ENCODE measurements at regions of chr5 and their contacts with region 1.

Region 1: GRCh38 chr5:142145106-142145900 is 36.7 kb downstream of the NDFIP1 start:
- DNase-seq: peak; percentile 45
- ATAC-seq: peak; percentile 95
- H3K4me3 ChIP-seq: no peak overlapping the region
- H3K27ac ChIP-seq: no peak overlapping the region
- H3K4me1 ChIP-seq: no peaks in the 10 kb centered on the region
- H3K27me3 ChIP-seq: no peaks in the 10 kb centered on the region
- CTCF ChIP-seq: peak; percentile 69 to 84 (median 84); a peak in 5 of 6 replicates
- POLR2A ChIP-seq: no peak
- RAD21 ChIP-seq: peak; percentile 71

Region 2: DNA sequence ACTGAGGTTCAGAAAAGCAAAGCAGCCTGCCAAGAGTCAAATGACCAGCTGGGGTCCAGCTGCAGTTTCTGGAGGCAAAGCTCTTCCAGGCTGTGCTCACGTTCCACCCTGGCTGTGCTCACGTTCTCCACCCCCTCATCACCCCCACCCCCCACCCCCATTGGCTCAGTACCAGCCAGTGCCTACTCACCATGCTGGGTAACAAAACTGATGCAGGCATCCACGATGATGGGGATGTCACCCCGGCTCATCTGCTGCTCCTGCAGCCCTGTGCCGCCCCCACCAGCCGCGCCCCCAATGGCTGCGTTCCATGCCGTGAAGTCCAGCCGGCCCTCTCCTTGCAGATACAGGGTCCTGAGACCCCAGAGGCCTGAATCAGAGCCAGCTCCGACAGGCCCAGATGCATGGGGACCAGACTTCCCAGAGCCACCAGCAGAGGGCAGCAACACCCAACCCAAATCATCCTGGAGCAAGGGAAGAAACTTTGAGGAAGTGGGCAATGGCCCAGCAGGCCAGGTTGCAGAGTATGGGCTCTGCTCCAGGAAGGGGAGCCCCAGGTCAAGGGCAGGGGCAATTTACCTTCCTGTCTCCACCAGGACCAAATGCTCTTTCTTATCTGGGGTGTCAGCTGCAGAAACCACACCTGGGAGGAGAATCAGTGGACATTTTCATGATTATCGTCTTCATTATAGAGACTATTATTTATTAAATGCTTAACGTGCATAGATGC is 480.4 kb before region 1 on chr5:
- CTCF ChIA-PET with region 1: interaction called, 4 read pairs
- POLR2A ChIA-PET with region 1: no interaction called
- RAD21 ChIA-PET with region 1: no interaction called
- intact Hi-C with region 1: loop called (anchors 10 kb)
- DNase-seq: peak; percentile 54
- ATAC-seq: peak; percentile 95
- H3K4me3 ChIP-seq: no peak overlapping the region
- H3K27ac ChIP-seq: no peak overlapping the region
- H3K4me1 ChIP-seq: 0 out of 4 replicates have a peak, but pooled peaks cover 0 to 3% of the 10 kb centered on the region in 2 experiments
- H3K27me3 ChIP-seq: no peaks in the 10 kb centered on the region
- CTCF ChIP-seq: peak; percentile 69 to 94 (median 92); a peak in 5 of 6 replicates
- POLR2A ChIP-seq: no peak
- RAD21 ChIP-seq: peak; percentile 95

Region 3: GRCh38 chr5:141691867-141692532 is 453.3 kb before region 1 on chr5:
- CTCF ChIA-PET with region 1: interaction called, 18 read pairs
- POLR2A ChIA-PET with region 1: no interaction called
- RAD21 ChIA-PET with region 1: no interaction called
- intact Hi-C with region 1: loop called (anchors 2 kb)
- DNase-seq: peak; percentile 51
- ATAC-seq: peak; percentile 98
- H3K4me3 ChIP-seq: peak overlapping the region in 1 of 2 experiments; percentile 33; a peak in 1 of 4 replicates
- H3K27ac ChIP-seq: no peak overlapping the region
- H3K4me1 ChIP-seq: peaks cover 0 to 18% of the 10 kb centered on the region in 2 experiments; a peak in 3 of 4 replicates
- H3K27me3 ChIP-seq: no peaks in the 10 kb centered on the region
- CTCF ChIP-seq: peak; percentile 90 to 98 (median 92)
- POLR2A ChIP-seq: no peak
- RAD21 ChIP-seq: peak; percentile 100

Region 4: DNA sequence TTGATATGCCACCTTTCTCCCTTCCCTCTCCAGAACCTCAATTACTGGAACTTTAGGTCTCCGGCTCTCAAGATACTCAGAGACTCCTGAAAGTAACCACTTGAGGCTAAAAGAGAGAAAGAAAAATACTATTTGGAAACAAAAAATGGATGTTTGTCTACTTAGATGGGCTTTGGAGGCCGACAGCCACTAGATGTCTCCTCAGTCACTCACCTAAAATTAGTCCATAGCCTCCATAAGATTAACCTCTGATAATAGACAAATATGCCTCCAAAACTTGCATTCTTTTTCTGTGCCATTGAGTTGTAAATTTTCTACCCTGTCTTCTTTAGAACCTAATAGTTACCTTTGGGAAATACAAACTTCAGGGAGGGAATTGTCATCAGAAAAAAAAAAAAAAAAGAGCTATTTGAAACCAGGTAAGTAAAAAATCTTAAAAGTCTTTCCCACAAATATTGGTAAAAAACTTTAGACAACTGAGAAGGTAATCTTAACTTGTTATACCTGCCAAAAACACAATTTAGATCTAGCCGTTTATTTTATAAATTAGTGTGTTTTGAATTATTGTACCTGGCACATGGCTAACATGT is 255.9 kb before region 1 on chr5:
- CTCF ChIA-PET with region 1: no interaction called
- POLR2A ChIA-PET with region 1: no interaction called
- RAD21 ChIA-PET with region 1: no interaction called
- intact Hi-C with region 1: loop called (anchors 5 kb)
- DNase-seq: no peak
- ATAC-seq: peak; percentile 76
- H3K4me3 ChIP-seq: no peak overlapping the region
- H3K27ac ChIP-seq: no peak overlapping the region
- H3K4me1 ChIP-seq: no peaks in the 10 kb centered on the region
- H3K27me3 ChIP-seq: no peaks in the 10 kb centered on the region
- CTCF ChIP-seq: peak; percentile 37 to 70 (median 55); a peak in 4 of 6 replicates
- POLR2A ChIP-seq: no peak
- RAD21 ChIP-seq: peak; percentile 69

Region 5: DNA sequence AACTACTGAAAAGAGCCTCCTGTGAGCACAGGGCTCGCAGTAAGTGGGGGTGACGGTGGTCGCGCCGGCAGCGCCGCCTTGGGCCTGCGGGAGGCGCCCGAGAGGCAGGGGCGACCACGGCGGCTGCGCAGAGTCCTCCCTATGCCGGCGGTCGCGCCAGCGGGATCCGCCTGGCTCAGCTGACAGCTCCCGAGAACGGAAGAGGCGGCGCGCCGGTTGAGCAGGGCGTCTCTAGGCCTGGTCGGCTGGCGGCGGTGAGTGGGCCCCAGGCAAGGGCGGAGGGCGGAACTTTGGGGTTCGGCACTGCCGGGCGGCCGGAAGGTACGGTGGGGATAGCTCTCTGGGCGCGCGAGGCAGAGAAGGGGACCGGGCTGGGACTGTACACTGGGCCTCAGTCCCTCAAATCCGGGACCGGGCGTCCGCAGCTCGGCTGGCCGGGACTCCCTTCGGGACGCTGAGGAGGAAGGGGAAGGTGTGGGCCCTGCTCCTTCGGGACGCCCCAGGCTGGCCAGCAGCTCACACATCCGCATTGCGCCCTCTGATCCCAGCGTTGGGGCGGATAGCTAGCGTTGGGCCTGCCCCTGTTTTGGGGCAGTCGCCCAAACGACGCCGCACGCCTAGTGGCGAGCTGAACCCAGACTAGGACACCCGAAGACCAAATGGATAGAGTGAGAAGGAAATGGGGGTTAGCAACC is 176.2 kb before region 1 on chr5 and contains the start of gene RNF14:
- CTCF ChIA-PET with region 1: interaction called, 12 read pairs
- POLR2A ChIA-PET with region 1: interaction called, 3 read pairs
- RAD21 ChIA-PET with region 1: no interaction called
- intact Hi-C with region 1: no loop called
- DNase-seq: peak; percentile 83
- ATAC-seq: peak; percentile 97
- H3K4me3 ChIP-seq: peak within 1 kb of the TSS; percentile 74 to 83
- H3K27ac ChIP-seq: peak within 1 kb of the TSS; percentile 83
- H3K4me1 ChIP-seq: peaks cover 6 to 16% of the 10 kb centered on the region in 2 experiments
- H3K27me3 ChIP-seq: no peaks in the 10 kb centered on the region
- CTCF ChIP-seq: peak; percentile 44 to 79 (median 67); a peak in 5 of 6 replicates
- POLR2A ChIP-seq: peak; percentile 34
- RAD21 ChIP-seq: no peak; the same call in 1 of the 2 replicates
- total RNA-seq, gene RNF14: 37.5 TPM

Region 6: GRCh38 chr5:141992349-141992963 is 152.8 kb before region 1 on chr5:
- CTCF ChIA-PET with region 1: interaction called, 39 read pairs
- POLR2A ChIA-PET with region 1: interaction called, 3 read pairs
- RAD21 ChIA-PET with region 1: no interaction called
- intact Hi-C with region 1: loop called (anchors 1 kb)
- DNase-seq: no peak
- ATAC-seq: peak; percentile 88
- H3K4me3 ChIP-seq: no peak overlapping the region
- H3K27ac ChIP-seq: no peak overlapping the region
- H3K4me1 ChIP-seq: no peaks in the 10 kb centered on the region
- H3K27me3 ChIP-seq: no peaks in the 10 kb centered on the region
- CTCF ChIP-seq: peak; percentile 69 to 82 (median 79)
- POLR2A ChIP-seq: no peak
- RAD21 ChIP-seq: peak; percentile 78

Region 7: GRCh38 chr5:142012792-142013388 is 132.4 kb before region 1 on chr5 and contains the start of gene GNPDA1:
- CTCF ChIA-PET with region 1: interaction called, 35 read pairs
- POLR2A ChIA-PET with region 1: interaction called, 7 read pairs
- RAD21 ChIA-PET with region 1: interaction called, 4 read pairs
- intact Hi-C with region 1: loop called (anchors 1 kb)
- DNase-seq: peak; percentile 49
- ATAC-seq: peak; percentile 82
- H3K4me3 ChIP-seq: peak within 1 kb of the TSS; percentile 62 to 88
- H3K27ac ChIP-seq: peak within 1 kb of the TSS; percentile 66
- H3K4me1 ChIP-seq: peaks cover 13 to 45% of the 10 kb centered on the region in 2 experiments
- H3K27me3 ChIP-seq: no peaks in the 10 kb centered on the region
- CTCF ChIP-seq: no peak
- POLR2A ChIP-seq: peak; percentile 75
- RAD21 ChIP-seq: no peak
- total RNA-seq, gene GNPDA1: 45.6 TPM

Region 8: GRCh38 chr5:142156839-142157463 is 11.6 kb after region 1 on chr5:
- CTCF ChIA-PET with region 1: no interaction called
- POLR2A ChIA-PET with region 1: no interaction called
- RAD21 ChIA-PET with region 1: no interaction called
- intact Hi-C with region 1: no loop called
- DNase-seq: no peak
- ATAC-seq: no peak
- H3K4me3 ChIP-seq: no peak overlapping the region
- H3K27ac ChIP-seq: no peak overlapping the region
- H3K4me1 ChIP-seq: peaks cover 2 to 9% of the 10 kb centered on the region in 2 experiments; a peak in 2 of 4 replicates
- H3K27me3 ChIP-seq: no peaks in the 10 kb centered on the region
- CTCF ChIP-seq: no peak
- POLR2A ChIP-seq: no peak
- RAD21 ChIP-seq: no peak

Measured in HCT116 (cell line).